ENCODE measurements at regions of chr16 and their contacts with region 1.

Region 1: GRCh38 chr16:69217433-69217832 is 30.5 kb downstream of the SNTB2 start:
- DNase-seq: peak; percentile 73
- ATAC-seq: peak; percentile 80
- H3K4me3 ChIP-seq: peak overlapping the region; percentile 41; the same call in 1 of the 2 replicates
- H3K27ac ChIP-seq: peak overlapping the region; percentile 76
- H3K4me1 ChIP-seq: peaks cover 49% of the 10 kb centered on the region
- H3K27me3 ChIP-seq: no peaks in the 10 kb centered on the region
- CTCF ChIP-seq: no peak

Region 2: DNA sequence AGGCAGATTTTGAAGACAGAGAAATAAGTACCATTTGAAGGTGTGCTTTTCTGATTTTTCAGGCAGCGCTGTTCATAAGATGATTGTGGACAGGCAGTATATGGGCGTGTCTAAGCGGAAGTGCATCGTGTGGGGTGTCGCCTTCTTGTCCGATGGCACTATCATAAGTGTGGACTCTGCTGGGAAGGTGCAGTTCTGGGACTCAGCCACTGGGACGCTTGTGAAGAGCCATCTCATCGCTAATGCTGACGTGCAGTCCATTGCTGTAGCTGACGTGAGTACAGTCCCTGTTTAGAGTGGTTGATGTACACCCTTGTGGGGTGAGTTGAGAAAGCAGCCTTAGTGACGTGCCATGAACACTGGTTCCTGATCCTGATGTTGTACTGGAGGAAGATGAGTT is 74.3 kb before region 1 on chr16:
- CTCF ChIA-PET with region 1: no interaction called
- POLR2A ChIA-PET with region 1: interaction called, 18 read pairs
- intact Hi-C with region 1: no loop called
- DNase-seq: no peak
- ATAC-seq: peak; percentile 38; the same call in 1 of the 2 replicates
- H3K4me3 ChIP-seq: no peak overlapping the region
- H3K27ac ChIP-seq: no peak overlapping the region
- H3K4me1 ChIP-seq: no peaks in the 10 kb centered on the region
- H3K27me3 ChIP-seq: no peaks in the 10 kb centered on the region
- CTCF ChIP-seq: peak; percentile 22; the same call in 1 of the 2 replicates

Region 3: DNA sequence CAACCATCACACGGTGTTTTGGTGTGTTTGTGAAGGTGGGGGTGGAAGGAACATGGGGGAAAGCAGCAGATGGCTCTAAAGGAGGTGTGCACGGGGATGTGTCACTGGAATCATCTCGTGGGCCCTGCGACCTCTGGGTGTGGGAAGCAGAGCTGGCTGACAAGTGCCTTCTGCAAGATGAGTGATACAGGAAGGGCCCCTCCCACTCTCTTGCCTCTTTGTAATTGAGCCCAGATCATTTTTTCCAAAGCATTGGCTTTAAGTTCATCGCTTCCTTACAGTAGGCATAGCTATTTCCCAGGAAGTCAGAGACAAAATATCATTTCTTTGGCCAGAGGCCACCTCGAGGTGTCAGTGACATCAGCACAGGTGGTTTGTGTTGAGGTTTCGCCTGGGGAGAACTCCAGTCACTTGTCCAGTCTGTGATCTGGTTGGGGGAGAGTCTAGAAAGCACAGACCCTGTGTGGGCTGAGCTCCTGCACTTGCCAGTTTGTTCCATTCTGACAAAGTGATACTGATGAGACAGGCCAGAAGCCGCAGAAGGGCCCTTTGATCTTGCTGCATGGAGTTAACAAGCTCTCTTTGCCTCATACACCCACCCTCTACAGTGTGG is 51.1 kb before region 1 on chr16:
- CTCF ChIA-PET with region 1: no interaction called
- POLR2A ChIA-PET with region 1: no interaction called
- intact Hi-C with region 1: loop called (anchors 5 kb)
- DNase-seq: peak; percentile 76
- ATAC-seq: peak; percentile 68
- H3K4me3 ChIP-seq: peak overlapping the region; percentile 28; the same call in 1 of the 2 replicates
- H3K27ac ChIP-seq: peak overlapping the region; percentile 99
- H3K4me1 ChIP-seq: peaks cover 29% of the 10 kb centered on the region
- H3K27me3 ChIP-seq: no peaks in the 10 kb centered on the region
- CTCF ChIP-seq: no peak

Region 4: DNA sequence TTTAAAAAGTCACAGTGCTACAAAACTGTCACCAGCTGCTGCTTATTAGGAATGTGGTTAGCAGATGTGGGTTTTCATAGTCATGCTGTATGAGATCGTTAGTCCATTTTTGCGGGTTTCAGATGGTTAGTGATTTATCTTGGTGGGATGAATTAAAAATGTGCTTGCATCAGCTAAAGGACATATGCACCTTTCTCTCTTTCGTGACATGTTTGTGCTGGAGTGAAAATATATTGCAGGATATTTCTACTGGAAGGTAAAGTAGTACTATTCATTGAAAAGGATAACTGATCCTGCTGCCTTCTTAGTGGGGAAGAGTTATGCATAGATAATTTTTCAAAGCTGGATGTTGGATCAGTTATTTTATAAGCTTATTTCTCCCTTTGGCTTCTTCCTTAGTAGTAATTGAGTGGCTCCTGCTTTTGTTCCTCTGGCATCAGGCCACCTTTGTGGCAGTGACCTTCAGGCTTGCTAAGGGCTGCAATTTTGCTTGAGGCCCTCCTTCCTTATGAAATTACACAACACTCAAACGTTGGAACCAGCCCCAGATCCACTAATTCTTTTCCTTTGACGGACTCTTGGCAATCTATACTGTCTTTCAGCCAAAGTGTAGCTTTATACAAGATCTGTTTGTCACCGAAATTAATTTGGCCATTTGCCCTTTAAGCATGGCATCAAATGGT is 38.0 kb before region 1 on chr16:
- CTCF ChIA-PET with region 1: no interaction called
- POLR2A ChIA-PET with region 1: no interaction called
- intact Hi-C with region 1: no loop called
- DNase-seq: peak; percentile 88
- ATAC-seq: peak; percentile 56
- H3K4me3 ChIP-seq: no peak overlapping the region
- H3K27ac ChIP-seq: peak overlapping the region; percentile 56
- H3K4me1 ChIP-seq: peaks cover 39% of the 10 kb centered on the region
- H3K27me3 ChIP-seq: no peaks in the 10 kb centered on the region
- CTCF ChIP-seq: no peak

Measured in PC-3 (cell line).